ENCODE measurements at regions of chr19 and their contacts with region 1.

Region 1: DNA sequence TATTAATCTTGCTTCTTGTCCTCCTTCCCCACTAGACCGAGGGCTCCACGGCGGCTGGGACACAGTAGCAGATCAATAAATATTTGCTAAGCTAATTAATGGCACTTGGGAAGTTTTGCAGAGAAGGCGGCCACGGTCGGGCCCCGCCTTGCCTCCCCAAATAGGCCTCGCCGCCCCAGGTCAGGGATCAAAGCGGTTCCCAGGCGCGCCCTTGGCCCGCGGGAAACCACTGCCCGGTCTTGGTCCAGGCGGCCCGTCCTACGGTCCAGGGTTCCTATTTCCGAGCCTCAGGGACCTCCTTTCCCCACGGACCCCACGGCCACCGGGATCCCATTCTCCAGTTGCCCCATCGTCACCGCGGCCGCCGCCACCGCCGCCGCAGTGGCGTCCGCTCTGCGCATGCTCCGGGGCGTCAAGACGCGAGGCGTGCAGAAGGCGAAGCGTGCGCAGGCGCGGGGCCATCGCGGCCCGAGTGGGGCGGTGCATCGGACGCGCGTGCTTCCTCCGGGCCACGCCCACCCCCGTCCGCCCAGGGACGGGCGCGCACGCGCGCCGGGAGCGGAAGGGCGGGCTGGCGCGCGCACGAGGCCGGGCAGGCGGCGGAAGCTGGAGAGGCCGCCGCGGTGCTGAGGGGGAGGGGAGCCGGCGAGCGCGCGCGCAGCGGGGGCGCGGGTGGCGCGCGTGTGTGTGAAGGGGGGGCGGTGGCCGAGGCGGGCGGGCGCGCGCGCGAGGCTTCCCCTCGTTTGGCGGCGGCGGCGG is at the start of gene SMARCA4:
- DNase-seq: peak; percentile 99
- ATAC-seq: peak; percentile 87
- H3K4me3 Mint-ChIP-seq: peak within 1 kb of the TSS; percentile 93
- H3K27ac Mint-ChIP-seq: peak within 1 kb of the TSS; percentile 87
- H3K4me1 Mint-ChIP-seq: peaks cover 35% of the 10 kb centered on the region
- H3K27me3 Mint-ChIP-seq: no peaks in the 10 kb centered on the region
- CTCF ChIP-seq: no peak
- total RNA-seq, gene SMARCA4: 85.1 and 93.6 TPM in 2 replicates

Region 2: GRCh38 chr19:10835754-10836477 is 124.6 kb before region 1 on chr19 and contains the start of gene TMED1:
- CTCF ChIA-PET with region 1: no interaction called
- POLR2A ChIA-PET with region 1: interaction called, 4 read pairs
- intact Hi-C with region 1: loop called (anchors 1 kb)
- DNase-seq: peak; percentile 86
- ATAC-seq: peak; percentile 87
- H3K4me3 Mint-ChIP-seq: peak within 1 kb of the TSS; percentile 97
- H3K27ac Mint-ChIP-seq: peak within 1 kb of the TSS; percentile 99
- H3K4me1 Mint-ChIP-seq: peaks cover 18% of the 10 kb centered on the region
- H3K27me3 Mint-ChIP-seq: no peaks in the 10 kb centered on the region
- CTCF ChIP-seq: no peak
- total RNA-seq, gene TMED1: 11.9 and 15.7 TPM in 2 replicates

Region 3: GRCh38 chr19:10946964-10947657 is 13.4 kb before region 1 on chr19:
- CTCF ChIA-PET with region 1: interaction called, 5 read pairs
- POLR2A ChIA-PET with region 1: interaction called, 4 read pairs
- intact Hi-C with region 1: loop called (anchors 2 kb)
- DNase-seq: no peak
- ATAC-seq: no peak
- H3K4me3 Mint-ChIP-seq: no peak overlapping the region
- H3K27ac Mint-ChIP-seq: no peak overlapping the region
- H3K4me1 Mint-ChIP-seq: peaks cover 1% of the 10 kb centered on the region
- H3K27me3 Mint-ChIP-seq: no peaks in the 10 kb centered on the region
- CTCF ChIP-seq: no peak

Region 4: DNA sequence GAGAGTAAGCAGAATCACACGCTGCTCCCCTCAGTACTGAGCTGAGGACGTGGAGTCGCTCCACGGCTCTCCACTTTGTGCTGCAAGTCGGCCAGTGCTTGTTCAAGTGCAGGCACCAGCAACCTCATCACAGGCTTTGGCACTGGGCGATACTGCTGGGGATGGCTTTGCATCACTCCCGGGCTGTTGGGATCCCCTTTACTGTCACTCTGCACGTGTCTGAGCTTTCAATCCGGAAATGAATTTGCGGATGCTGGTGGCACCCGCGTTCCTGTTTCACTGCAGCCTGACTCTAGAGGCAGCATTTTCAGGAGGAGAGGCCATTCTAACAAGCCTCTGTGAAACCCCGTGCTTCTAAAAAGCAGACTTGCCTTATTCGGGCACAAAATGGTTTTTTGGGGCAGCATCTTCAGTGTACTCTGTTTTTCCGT is 19.5 kb after region 1 on chr19:
- CTCF ChIA-PET with region 1: no interaction called
- POLR2A ChIA-PET with region 1: interaction called, 5 read pairs
- intact Hi-C with region 1: loop called (anchors 1 kb)
- DNase-seq: no peak
- ATAC-seq: peak; percentile 81
- H3K4me3 Mint-ChIP-seq: peak overlapping the region; percentile 33
- H3K27ac Mint-ChIP-seq: no peak overlapping the region
- H3K4me1 Mint-ChIP-seq: peaks cover 26% of the 10 kb centered on the region
- H3K27me3 Mint-ChIP-seq: no peaks in the 10 kb centered on the region
- CTCF ChIP-seq: no peak

Measured in activated B cell treated with CpG ODN at 0.5 μM for 24 hours (primary cell).